A673 (cell line): ENCODE measurements at regions of chrX and their contacts with region 1.

Region 1: GRCh38 chrX:74382613-74383012 is 38.7 kb upstream of the SLC16A2 start:
- DNase-seq: peak; percentile 79
- H3K4me3 ChIP-seq: no peak overlapping the region
- H3K27ac ChIP-seq: no peak overlapping the region
- H3K4me1 ChIP-seq: no peaks in the 10 kb centered on the region
- H3K27me3 ChIP-seq: no peaks in the 10 kb centered on the region
- CTCF ChIP-seq: peak; percentile 81

Region 2: DNA sequence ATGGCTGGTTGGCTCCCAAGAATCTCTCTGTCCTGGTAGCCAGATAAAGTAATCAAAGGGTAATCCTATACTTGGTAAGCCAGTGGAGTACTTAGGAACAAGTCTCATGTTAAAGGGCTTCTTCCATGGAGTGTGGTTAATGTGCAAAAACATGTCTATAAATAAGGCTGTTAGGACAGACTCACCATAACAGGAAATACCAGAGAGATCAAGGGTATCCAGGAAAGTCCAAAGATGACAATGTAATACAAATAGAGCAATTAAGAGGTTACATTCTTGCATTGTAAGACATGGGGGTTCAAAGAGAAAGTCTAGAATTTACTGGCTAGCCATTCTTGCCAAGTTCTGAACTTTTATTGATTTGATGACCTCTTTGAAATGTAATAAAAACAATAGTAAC is 140.6 kb before region 1 on chrX:
- CTCF ChIA-PET with region 1: no interaction called
- POLR2A ChIA-PET with region 1: no interaction called
- intact Hi-C with region 1: no loop called
- DNase-seq: no peak
- H3K4me3 ChIP-seq: no peak overlapping the region
- H3K27ac ChIP-seq: no peak overlapping the region
- H3K4me1 ChIP-seq: no peaks in the 10 kb centered on the region
- H3K27me3 ChIP-seq: no peaks in the 10 kb centered on the region
- CTCF ChIP-seq: no peak

Region 3: DNA sequence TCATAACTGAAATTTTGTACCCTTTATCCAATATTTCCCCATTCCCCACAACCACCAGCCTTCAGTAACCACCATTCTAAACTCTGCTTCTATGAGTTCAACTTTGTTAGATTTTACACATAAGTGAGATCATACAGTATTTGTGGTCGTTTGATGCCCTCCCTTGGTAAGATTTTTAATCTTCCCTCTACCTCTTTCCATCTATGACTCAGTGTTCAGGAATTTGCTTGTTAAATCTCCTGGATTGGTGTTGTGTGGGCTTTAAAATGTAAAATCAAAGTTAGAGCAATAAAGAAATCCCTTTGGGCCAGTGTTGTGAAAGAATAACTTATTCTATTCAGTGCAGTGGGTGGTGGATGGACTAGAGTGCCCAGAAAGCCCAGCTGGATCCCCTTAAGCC is 76.1 kb after region 1 on chrX:
- CTCF ChIA-PET with region 1: no interaction called
- POLR2A ChIA-PET with region 1: no interaction called
- intact Hi-C with region 1: loop called (anchors 5 kb)
- DNase-seq: peak; percentile 67
- H3K4me3 ChIP-seq: no peak overlapping the region
- H3K27ac ChIP-seq: no peak overlapping the region
- H3K4me1 ChIP-seq: no peaks in the 10 kb centered on the region
- H3K27me3 ChIP-seq: no peaks in the 10 kb centered on the region
- CTCF ChIP-seq: 0 out of 2 replicates have a peak, but pooled peaks have one; percentile 22

Region 4: DNA sequence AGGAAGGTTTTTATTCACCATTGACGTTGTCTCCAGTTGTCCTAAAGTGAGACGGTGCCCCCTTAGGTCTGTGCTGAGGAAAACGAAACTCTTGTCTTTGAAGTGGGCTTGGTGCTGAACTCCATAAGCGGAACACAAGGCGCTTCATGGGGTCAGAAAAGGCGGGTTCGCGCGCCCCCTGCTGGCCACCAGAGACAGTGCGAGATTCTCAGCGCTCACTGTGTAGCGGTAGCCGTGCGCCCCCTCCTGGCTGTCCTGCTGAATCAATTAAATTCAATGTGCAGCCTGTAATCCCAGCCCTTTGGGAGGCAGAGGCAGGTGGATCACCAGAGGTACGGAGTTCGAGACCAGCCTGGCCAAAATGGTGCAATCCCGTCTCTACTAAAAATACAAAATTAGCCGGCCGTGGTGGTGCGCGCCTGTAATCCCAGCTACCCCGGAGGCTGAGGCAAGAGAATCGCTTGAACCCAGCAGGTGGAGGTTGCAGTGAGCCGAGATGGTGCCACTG is 167.7 kb after region 1 on chrX:
- CTCF ChIA-PET with region 1: interaction called, 3 read pairs
- POLR2A ChIA-PET with region 1: no interaction called
- intact Hi-C with region 1: loop called (anchors 1 kb)
- DNase-seq: peak; percentile 82
- H3K4me3 ChIP-seq: no peak overlapping the region
- H3K27ac ChIP-seq: no peak overlapping the region
- H3K4me1 ChIP-seq: no peaks in the 10 kb centered on the region
- H3K27me3 ChIP-seq: no peaks in the 10 kb centered on the region
- CTCF ChIP-seq: peak; percentile 99